Sciatic nerve (tissue), 2 donors: ENCODE measurements at regions of chr11 and their contacts with region 1.

Region 1: DNA sequence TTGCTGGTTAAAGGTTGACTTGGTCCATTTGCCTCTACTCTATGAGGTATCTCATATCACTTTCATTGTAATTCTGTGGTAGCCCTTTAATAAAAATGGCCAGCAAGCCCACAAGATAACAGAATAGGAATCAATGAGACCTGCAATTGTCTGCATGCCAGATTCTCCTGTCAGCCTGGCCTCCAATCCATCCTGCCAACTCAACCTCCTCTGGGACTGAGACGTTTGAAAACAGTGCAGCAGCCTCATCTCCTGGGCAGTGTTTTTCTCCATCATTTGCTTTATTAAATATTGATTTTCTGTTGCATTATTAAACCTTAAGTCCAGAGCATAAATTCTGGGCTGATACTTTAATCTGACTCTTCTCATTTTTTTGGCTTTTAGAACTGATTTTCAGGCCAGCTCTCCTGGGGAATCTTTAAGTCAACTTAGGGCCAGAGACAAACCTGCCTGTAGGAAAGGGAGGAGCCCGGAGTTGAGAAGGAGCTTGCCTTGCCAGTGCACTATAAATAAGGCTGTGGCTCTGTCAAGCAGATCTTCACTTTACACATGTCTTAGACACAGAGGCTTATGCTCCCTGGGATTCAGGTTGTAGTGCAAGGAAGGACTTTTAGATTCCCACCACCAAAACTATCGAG is 798.0 kb downstream of the NTM start:
- DNase-seq: no peak
- ATAC-seq: no peak

Region 2: GRCh38 chr11:132187814-132188213 is 19.4 kb after region 1 on chr11:
- intact Hi-C with region 1: loop called (anchors 1 kb)
- DNase-seq: no peak
- ATAC-seq: no peak

Region 3: DNA sequence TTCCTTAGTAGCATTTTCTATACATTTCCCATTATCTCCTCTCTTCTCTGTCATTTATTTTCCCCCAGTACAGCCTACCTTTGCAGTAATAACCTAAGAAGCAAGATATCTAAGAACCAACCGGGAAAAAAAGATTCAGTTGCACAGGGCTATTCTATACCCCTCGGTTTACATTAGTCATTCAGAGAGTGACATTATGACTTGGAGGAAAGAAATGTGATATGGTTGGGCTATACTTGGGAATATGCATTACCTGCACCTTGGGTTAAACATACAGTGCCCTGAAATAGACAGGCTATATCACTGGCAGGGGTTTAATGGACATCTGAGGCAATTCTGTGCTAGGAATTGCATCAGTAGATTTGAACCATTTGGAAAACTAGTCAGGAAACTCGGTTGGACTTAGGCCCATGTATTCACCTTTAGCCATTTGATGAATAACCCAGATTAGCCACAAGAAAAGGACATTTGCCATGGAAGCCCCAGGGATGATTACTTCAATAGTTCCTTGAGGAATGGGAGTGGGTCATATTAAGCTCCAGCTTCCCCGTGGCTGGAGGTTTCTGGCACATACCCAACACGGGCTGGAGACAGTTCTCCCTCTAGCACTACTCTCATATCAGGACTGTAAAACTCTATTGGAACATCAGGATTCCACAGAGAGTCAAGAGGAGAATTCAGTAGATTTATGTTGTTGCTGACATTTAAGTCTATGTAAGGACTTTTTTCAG is 175.1 kb after region 1 on chr11:
- intact Hi-C with region 1: no loop called
- DNase-seq: no peak
- ATAC-seq: no peak